B cell (primary cell): ENCODE measurements at regions of chr11 and their contacts with region 1.

Region 1: DNA sequence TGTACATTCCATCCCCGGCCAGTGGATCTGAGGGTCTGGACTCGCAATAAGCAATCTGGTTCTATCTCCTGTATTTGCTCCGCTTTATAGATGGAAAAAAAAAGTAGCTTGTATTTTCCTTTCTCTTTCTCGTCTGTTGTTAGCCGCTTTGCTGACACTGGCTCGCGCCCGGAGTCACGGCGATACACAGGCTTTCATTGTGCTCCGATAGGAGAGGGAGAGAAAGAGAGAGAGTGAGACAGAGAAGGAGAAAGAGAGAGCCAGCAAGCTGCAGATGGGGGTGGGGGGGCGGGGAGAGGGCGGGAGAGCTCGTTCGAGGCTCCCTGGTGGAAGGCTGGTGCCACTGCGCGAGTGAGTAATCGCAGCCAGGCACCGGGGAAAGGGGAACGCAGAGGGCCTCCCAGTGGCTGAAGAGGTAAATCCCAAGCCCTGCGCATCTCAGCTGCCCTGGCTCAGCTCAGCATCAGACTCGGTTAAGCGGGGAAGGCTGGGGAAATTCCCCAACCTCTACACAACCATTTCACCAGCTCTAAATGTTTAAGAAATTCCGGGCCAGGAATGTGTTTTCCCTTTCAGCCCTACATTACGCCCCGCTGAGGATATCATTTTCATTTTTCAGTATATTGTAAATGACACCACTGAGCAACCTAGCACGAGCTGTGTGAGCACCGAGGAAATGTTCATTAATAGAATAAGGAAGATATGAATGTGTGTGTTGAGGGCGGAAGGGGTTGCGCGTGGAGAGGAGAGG is at the start of gene MAML2:
- DNase-seq: peak; percentile 93
- ATAC-seq: peak; percentile 86
- H3K4me3 ChIP-seq: peak within 1 kb of the TSS; percentile 82 to 100 (median 92)
- H3K4me3 Mint-ChIP-seq: peak within 1 kb of the TSS; percentile 99
- H3K27ac ChIP-seq: peak within 1 kb of the TSS; percentile 45 to 77
- H3K27ac Mint-ChIP-seq: peak within 1 kb of the TSS; percentile 95
- H3K4me1 ChIP-seq: peaks cover 38 to 43% of the 10 kb centered on the region in 2 donors
- H3K4me1 Mint-ChIP-seq: peaks cover 51% of the 10 kb centered on the region
- H3K27me3 ChIP-seq: no peaks in the 10 kb centered on the region
- H3K27me3 Mint-ChIP-seq: no peaks in the 10 kb centered on the region
- CTCF ChIP-seq: peak; percentile 94
- total RNA-seq, gene MAML2: 26.0 and 26.4 TPM in 2 replicates

Region 2: DNA sequence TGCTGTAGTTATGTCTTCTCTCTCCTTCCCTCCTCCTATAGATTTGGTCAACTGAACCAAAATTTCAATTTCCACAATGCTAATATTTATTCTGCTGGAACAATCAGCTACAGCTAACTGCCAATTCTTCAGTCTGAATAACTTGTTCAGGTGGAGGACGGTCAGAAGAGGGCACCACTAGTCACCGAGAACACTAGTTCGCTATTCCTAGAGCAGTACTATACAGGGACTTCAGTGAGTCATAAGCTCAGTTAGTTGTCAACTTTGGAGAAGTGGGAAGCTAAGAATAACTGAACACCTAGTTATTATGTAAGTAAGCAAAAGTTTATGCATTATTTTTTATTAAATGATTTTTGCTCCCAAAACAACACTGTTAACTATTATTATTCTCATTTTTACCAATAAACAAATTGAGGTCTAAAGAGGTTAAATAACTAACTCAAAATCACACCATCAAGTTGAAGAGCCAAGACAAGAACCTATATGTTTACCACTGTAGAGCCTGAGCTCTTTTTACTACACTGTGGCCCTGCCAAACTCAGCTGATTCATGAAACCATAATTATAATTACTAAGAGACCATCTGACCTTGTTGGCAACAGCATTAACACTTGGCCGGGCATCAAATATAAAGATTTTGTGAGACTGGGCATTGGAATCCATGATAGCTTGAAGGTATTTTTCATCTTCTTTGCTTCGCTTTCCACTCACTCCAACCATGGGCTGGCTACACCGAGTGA is 493.9 kb before region 1 on chr11:
- CTCF ChIA-PET with region 1: interaction called, 16 read pairs
- POLR2A ChIA-PET with region 1: no interaction called
- intact Hi-C with region 1: no loop called
- DNase-seq: peak; percentile 29
- ATAC-seq: no peak
- H3K4me3 ChIP-seq: no peak overlapping the region
- H3K4me3 Mint-ChIP-seq: no peak overlapping the region
- H3K27ac ChIP-seq: no peak overlapping the region
- H3K27ac Mint-ChIP-seq: peak overlapping the region; percentile 21
- H3K4me1 ChIP-seq: no peaks in the 10 kb centered on the region
- H3K4me1 Mint-ChIP-seq: no peaks in the 10 kb centered on the region
- H3K27me3 ChIP-seq: no peaks in the 10 kb centered on the region
- H3K27me3 Mint-ChIP-seq: no peaks in the 10 kb centered on the region
- CTCF ChIP-seq: no peak

Region 3: DNA sequence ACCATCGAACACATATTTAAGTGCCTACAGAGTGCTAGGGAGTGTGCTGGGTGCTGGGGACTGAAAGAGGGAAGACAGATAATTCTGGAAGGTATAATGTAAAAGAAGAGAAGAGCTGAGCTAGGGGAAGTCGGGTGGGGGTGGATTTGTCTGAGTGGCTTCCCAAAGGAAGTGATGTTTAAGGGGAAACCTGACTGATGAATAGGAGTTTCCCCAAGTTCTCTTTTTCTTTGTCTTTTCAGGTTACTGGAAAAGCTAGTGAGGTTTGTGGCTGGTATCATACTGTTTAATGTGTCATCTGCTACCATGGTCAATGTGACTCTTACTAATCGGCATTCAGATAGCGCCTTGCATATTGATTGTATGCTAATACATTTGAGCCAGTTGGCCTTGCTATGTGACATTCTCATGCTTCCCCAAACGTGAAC is 267.6 kb before region 1 on chr11:
- CTCF ChIA-PET with region 1: interaction called, 24 read pairs
- POLR2A ChIA-PET with region 1: no interaction called
- intact Hi-C with region 1: no loop called
- DNase-seq: peak; percentile 53
- ATAC-seq: peak; percentile 62
- H3K4me3 ChIP-seq: no peak overlapping the region
- H3K4me3 Mint-ChIP-seq: peak overlapping the region; percentile 32
- H3K27ac ChIP-seq: peak overlapping the region in 1 of 2 donors; percentile 53
- H3K27ac Mint-ChIP-seq: peak overlapping the region; percentile 43
- H3K4me1 ChIP-seq: peaks cover 29 to 30% of the 10 kb centered on the region in 2 donors
- H3K4me1 Mint-ChIP-seq: peaks cover 42% of the 10 kb centered on the region
- H3K27me3 ChIP-seq: no peaks in the 10 kb centered on the region
- H3K27me3 Mint-ChIP-seq: no peaks in the 10 kb centered on the region
- CTCF ChIP-seq: no peak

Region 4: GRCh38 chr11:96197801-96198701 is 145.1 kb before region 1 on chr11:
- CTCF ChIA-PET with region 1: interaction called, 18 read pairs
- POLR2A ChIA-PET with region 1: interaction called, 4 read pairs
- intact Hi-C with region 1: no loop called
- DNase-seq: peak; percentile 62
- ATAC-seq: peak; percentile 83
- H3K4me3 ChIP-seq: peak overlapping the region in 1 of 5 experiments; percentile 38
- H3K4me3 Mint-ChIP-seq: peak overlapping the region; percentile 46
- H3K27ac ChIP-seq: peak overlapping the region; percentile 55 to 71
- H3K27ac Mint-ChIP-seq: peak overlapping the region; percentile 90
- H3K4me1 ChIP-seq: peaks cover 38 to 50% of the 10 kb centered on the region in 2 donors
- H3K4me1 Mint-ChIP-seq: peaks cover 74% of the 10 kb centered on the region
- H3K27me3 ChIP-seq: no peaks in the 10 kb centered on the region
- H3K27me3 Mint-ChIP-seq: no peaks in the 10 kb centered on the region
- CTCF ChIP-seq: no peak

Region 5: DNA sequence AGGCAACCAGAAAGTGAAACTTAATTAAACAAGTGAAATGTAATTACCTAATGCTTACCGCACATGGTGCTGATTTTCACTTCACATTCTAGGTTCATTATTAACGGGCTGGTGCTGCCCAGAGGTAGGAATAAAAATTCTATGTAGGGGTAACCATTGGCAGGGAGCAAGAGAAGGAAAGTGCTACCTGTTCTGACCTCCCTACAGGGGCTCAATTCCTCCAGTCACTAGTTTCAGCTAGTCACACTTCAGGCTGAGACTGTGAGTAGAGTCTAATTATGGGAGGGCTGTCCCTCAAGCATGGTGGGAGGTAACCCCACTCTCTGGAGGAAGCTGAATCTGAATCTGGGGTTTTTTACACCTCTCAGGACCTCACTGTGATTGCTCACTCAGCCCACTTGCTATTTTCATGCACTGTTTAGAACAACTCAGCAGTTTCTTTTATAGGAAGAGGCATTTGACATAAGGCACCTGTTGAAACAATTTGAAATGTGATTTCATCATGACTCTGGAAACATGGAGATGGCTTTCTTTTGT is 75.6 kb before region 1 on chr11:
- CTCF ChIA-PET with region 1: interaction called, 15 read pairs
- POLR2A ChIA-PET with region 1: interaction called, 5 read pairs
- intact Hi-C with region 1: no loop called
- DNase-seq: peak; percentile 73
- ATAC-seq: peak; percentile 94
- H3K4me3 ChIP-seq: peak overlapping the region in 4 of 5 experiments; percentile 2 to 47 (median 34)
- H3K4me3 Mint-ChIP-seq: peak overlapping the region; percentile 75
- H3K27ac ChIP-seq: peak overlapping the region; percentile 68 to 86
- H3K27ac Mint-ChIP-seq: peak overlapping the region; percentile 90
- H3K4me1 ChIP-seq: peaks cover 24 to 29% of the 10 kb centered on the region in 2 donors
- H3K4me1 Mint-ChIP-seq: peaks cover 53% of the 10 kb centered on the region
- H3K27me3 ChIP-seq: no peaks in the 10 kb centered on the region
- H3K27me3 Mint-ChIP-seq: no peaks in the 10 kb centered on the region
- CTCF ChIP-seq: no peak

Region 6: DNA sequence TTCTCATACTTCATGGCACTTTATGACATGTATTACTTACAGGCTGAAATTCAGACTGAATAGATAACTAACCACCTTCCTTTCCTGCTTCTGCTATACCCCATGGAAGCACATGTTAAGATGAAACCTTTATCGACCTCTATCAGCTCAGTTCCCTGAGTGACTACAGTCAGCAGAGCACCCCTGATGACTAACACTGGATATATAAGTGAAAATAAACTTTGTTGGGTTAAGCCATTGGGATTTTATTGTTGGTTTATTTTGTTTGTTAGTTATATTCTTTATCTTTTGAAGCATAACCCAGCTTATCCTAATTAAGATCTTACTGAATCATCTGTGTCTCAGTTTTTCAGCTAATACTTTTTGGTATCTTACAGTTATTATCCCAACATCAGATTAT is 22.9 kb after region 1 on chr11:
- CTCF ChIA-PET with region 1: interaction called, 10 read pairs
- POLR2A ChIA-PET with region 1: interaction called, 3 read pairs
- intact Hi-C with region 1: no loop called
- DNase-seq: no peak
- ATAC-seq: no peak
- H3K4me3 ChIP-seq: no peak overlapping the region
- H3K4me3 Mint-ChIP-seq: no peak overlapping the region
- H3K27ac ChIP-seq: no peak overlapping the region
- H3K27ac Mint-ChIP-seq: no peak overlapping the region
- H3K4me1 ChIP-seq: peaks cover 10% of the 10 kb centered on the region in 2 donors
- H3K4me1 Mint-ChIP-seq: peaks cover 8% of the 10 kb centered on the region
- H3K27me3 ChIP-seq: no peaks in the 10 kb centered on the region
- H3K27me3 Mint-ChIP-seq: no peaks in the 10 kb centered on the region
- CTCF ChIP-seq: no peak

Region 7: DNA sequence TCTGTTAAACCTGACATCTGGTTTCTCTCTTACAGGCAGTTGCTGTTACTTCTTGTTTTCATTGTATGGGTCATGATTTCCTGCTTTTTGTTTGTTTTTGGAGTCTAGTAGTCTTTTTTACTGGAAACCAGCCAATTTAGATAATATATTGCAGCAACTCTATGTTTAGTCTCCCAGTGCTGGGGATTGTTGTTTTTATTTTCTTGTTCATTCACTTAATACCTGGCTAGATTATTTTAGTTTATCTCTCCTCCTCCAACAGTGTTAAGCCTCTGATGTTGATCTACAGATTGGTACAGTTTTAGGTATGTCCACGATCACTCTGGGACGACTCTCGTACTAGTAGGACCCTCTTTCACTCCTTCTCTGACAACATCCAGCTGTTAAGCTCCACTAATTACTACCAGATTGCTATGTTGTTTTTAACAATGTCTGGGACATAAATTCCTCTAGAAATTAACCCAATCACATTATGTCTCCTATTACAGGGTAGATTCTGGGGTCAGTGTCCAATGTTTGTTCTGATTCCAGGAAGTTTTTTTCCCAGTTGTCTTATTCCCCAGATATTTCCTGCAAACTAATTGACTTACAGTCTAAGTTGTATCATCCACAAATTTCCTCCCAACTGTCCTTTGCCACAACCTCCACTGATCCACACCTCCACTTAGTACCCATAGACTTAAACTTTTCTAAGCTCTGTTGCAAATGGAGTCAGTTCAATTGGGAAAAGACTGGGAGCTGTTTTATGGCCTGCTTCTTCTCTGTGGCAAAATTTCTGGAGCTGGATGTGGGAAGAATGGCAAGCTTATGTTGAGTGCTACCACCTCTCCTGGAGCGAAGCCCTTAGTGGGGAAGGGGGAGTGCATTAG is 1397.0 kb after region 1 on chr11:
- CTCF ChIA-PET with region 1: no interaction called
- POLR2A ChIA-PET with region 1: no interaction called
- intact Hi-C with region 1: no loop called
- DNase-seq: no peak
- ATAC-seq: no peak
- H3K4me3 ChIP-seq: no peak overlapping the region
- H3K4me3 Mint-ChIP-seq: no peak overlapping the region
- H3K27ac ChIP-seq: no peak overlapping the region
- H3K27ac Mint-ChIP-seq: no peak overlapping the region
- H3K4me1 ChIP-seq: no peaks in the 10 kb centered on the region
- H3K4me1 Mint-ChIP-seq: no peaks in the 10 kb centered on the region
- H3K27me3 ChIP-seq: no peaks in the 10 kb centered on the region
- H3K27me3 Mint-ChIP-seq: no peaks in the 10 kb centered on the region
- CTCF ChIP-seq: no peak